Common myeloid progenitor, CD34-positive (primary cell): ENCODE measurements at regions of chr7 and their contacts with region 1.

Region 1: DNA sequence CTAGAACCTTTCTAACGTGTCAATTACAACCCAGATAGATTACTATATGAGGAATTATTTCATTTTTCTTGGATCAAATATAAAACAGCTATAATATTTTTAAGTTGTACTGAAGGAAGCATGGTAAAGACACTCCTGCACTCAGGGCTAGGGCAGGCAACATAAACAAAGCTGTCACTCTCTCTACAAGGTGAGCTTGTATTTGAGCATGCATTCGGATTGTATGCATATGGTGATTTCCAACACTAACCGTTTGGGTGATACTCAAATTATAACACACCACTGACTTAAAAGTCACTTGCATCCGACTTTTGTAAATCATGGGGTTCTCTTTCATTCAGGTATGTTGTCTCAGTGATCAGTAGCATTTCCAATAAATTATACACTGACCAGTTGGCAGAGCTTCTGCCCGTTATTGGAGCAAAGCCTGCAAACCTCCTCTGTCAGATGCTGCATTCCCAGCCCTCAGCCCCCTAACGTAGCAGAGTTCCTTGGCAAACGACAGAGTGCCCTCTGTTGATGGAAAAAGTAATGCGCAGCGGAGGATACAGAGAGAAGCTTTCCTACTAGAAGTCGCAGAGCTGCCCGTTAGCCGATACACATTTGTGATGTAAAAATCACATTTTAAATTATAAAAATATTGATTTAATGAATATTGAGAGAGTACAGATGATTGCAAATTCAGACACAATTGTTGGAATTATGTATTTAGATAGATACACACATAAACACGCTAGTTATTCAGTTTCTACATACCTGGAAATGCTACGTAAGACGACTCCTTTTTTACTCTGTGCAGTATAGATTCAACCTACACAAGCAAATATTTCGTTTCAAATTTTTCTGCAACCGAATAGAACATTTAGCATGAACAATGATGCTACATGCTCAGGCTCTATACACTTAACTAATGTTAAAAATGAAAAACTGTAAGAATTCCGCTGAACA is 173.9 kb upstream of the SP4 start:
- DNase-seq: peak; percentile 74 to 81 (median 77)
- H3K4me3 ChIP-seq: peak overlapping the region in 1 of 7 experiments; percentile 27
- H3K27ac ChIP-seq: no peak overlapping the region
- H3K4me1 ChIP-seq: no peaks in the 10 kb centered on the region
- H3K27me3 ChIP-seq: peaks cover 19 to 67% (median 44%) of the 10 kb centered on the region in 5 experiments

Region 2: DNA sequence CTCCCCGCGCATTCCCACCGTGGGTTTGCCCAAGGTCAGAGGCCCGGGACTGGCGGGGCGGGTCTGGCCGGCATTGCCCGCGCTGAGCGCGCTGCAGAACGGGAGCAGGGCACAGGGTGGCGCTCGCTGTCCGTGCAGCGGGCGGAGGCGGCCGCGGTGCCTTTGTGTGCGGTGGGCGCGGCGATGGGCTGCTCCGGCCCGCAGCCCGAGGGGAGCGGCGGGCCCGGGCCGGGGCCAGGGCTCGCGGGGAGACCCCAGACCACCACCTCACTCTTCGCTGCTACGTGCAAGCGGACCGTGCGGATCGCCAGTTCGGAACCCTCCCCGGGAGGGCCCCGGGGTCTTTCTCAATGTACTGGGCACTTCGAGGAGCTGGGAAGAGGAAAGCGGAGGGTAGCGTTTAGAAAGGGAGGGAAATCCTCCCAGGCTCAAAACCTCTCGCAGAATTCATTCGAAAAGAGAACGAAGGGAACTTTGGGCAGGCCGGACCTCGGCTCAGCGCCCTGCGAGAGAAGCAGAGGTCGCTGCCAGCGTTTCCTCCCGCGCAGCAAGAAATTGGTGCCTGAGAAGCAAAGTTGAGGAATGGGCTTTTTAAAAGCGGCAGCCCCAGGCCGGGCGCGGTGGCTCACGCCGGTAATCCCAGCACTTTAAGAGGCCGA is 475.8 kb before region 1 on chr7:
- CTCF ChIA-PET with region 1: interaction called, 88 read pairs
- POLR2A ChIA-PET with region 1: no interaction called
- DNase-seq: peak in 2 of 3 donors; percentile 50 to 60
- H3K4me3 ChIP-seq: peak overlapping the region in 4 of 7 experiments; percentile 46 to 63 (median 56)
- H3K27ac ChIP-seq: no peak overlapping the region
- H3K4me1 ChIP-seq: peaks cover 0 to 12% (median 11%) of the 10 kb centered on the region in 4 experiments
- H3K27me3 ChIP-seq: peaks cover 32 to 94% (median 59%) of the 10 kb centered on the region in 5 experiments

Region 3: DNA sequence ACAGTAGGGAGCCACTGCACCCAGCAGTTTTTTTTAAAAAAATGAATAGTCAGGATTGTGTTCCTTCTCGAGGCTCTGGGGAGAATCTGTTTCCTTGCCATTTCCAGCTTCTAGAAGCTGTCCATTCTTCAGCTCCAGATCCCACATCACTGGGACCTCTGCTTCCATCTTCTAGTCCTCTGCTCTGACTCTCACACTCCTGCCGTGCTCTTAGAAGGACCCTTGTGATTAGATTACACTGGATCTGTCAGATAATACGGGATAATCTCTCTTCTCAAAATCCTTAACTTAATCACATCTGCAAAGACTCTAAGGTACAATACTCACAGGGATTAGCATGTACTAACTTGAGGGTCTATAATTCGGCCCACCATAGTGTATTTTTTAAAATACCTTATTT is 15.0 kb after region 1 on chr7:
- CTCF ChIA-PET with region 1: no interaction called
- POLR2A ChIA-PET with region 1: no interaction called
- DNase-seq: no peak
- H3K4me3 ChIP-seq: no peak overlapping the region
- H3K27ac ChIP-seq: no peak overlapping the region
- H3K4me1 ChIP-seq: no peaks in the 10 kb centered on the region
- H3K27me3 ChIP-seq: no peaks in the 10 kb centered on the region

Region 4: GRCh38 chr7:21507626-21508343 is 253.8 kb after region 1 on chr7:
- CTCF ChIA-PET with region 1: interaction called, 17 read pairs
- POLR2A ChIA-PET with region 1: no interaction called
- DNase-seq: peak; percentile 17 to 34 (median 31)
- H3K4me3 ChIP-seq: no peak overlapping the region
- H3K27ac ChIP-seq: no peak overlapping the region
- H3K4me1 ChIP-seq: no peaks in the 10 kb centered on the region
- H3K27me3 ChIP-seq: no peaks in the 10 kb centered on the region

Region 5: GRCh38 chr7:21767300-21767900 is 513.4 kb after region 1 on chr7:
- CTCF ChIA-PET with region 1: interaction called, 15 read pairs
- POLR2A ChIA-PET with region 1: no interaction called
- DNase-seq: peak; percentile 70 to 75 (median 70)
- H3K4me3 ChIP-seq: no peak overlapping the region
- H3K27ac ChIP-seq: no peak overlapping the region
- H3K4me1 ChIP-seq: peaks cover 0 to 12% (median 4%) of the 10 kb centered on the region in 4 experiments
- H3K27me3 ChIP-seq: no peaks in the 10 kb centered on the region